PC-3 (cell line): ENCODE measurements at regions of chr17 and their contacts with region 1.

Region 1: DNA sequence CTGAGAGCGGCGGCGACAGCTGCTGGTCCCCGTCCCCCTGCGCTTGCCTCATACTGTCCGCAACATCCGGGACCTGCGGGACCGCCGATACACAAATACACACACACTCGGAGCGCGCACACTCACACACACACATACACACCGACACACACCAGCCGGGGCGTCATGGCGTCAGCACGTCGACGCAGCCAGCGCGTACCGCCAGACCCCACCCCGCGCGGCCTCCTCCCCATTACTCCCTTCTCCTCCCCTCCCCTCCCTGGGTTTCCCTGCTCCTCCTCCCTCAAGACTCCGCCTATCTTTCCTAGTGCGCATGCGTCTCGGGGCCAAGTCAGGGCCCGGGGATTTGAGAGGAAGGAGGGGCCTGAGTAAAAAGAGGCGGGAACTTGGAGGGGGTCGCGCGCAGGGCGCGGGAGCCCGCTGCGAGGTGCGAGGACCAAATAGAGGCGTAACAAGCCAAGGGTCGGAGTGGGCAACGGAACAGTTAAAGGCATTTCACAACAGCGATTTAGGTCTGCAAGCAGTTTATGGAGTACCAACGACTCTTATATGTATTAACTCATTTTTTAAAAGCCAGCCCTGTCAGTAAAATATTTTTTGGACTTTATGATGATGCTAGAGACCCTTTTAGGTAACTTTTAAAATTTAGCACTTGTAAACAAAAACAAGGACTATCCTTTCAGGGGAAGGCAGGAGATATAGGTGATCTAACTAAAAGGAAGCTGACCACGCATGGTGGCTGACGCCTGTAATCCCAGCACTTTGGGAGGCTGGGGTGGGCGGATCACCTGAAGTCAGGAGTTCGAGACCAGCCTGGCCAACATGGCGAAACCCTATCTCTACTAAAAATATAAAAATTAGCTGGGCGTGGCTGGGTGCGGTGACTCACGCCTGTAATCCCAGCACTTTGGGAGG is at the start of gene SPOP:
- DNase-seq: peak; percentile 100
- ATAC-seq: peak; percentile 91
- H3K4me3 ChIP-seq: peak within 1 kb of the TSS; percentile 90
- H3K27ac ChIP-seq: peak within 1 kb of the TSS; percentile 71
- H3K4me1 ChIP-seq: peaks cover 24% of the 10 kb centered on the region
- H3K27me3 ChIP-seq: no peaks in the 10 kb centered on the region
- CTCF ChIP-seq: no peak
- total RNA-seq, gene SPOP: 52.9 and 54.7 TPM in 2 replicates

Region 2: DNA sequence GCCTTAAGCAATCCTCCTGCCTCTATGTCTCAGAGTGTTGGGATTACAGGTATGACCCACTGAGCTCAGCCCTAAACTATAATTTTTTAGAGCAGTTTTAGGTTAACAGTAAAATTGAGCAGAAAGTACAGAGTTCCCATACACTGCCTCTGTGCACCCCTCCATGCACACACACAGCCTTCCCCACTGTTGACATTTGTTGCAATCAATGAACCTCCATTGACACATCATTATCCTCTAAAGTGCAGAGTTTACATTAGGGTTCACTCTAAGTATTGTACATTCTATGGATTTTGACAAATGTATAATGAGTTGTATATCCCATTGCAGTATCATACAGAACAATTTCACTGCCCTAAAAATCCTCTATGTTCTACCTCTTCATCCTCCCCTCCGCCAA is 148.1 kb before region 1 on chr17:
- CTCF ChIA-PET with region 1: interaction called, 14 read pairs
- POLR2A ChIA-PET with region 1: no interaction called
- intact Hi-C with region 1: no loop called
- DNase-seq: no peak
- ATAC-seq: no peak
- H3K4me3 ChIP-seq: no peak overlapping the region
- H3K27ac ChIP-seq: no peak overlapping the region
- H3K4me1 ChIP-seq: no peaks in the 10 kb centered on the region
- H3K27me3 ChIP-seq: peaks cover 54% of the 10 kb centered on the region
- CTCF ChIP-seq: no peak

Region 3: GRCh38 chr17:49637050-49637449 is 41.1 kb before region 1 on chr17:
- CTCF ChIA-PET with region 1: no interaction called
- POLR2A ChIA-PET with region 1: no interaction called
- intact Hi-C with region 1: loop called (anchors 5 kb)
- DNase-seq: peak; percentile 22
- ATAC-seq: no peak
- H3K4me3 ChIP-seq: no peak overlapping the region
- H3K27ac ChIP-seq: no peak overlapping the region
- H3K4me1 ChIP-seq: peaks cover 13% of the 10 kb centered on the region
- H3K27me3 ChIP-seq: no peaks in the 10 kb centered on the region
- CTCF ChIP-seq: no peak

Region 4: DNA sequence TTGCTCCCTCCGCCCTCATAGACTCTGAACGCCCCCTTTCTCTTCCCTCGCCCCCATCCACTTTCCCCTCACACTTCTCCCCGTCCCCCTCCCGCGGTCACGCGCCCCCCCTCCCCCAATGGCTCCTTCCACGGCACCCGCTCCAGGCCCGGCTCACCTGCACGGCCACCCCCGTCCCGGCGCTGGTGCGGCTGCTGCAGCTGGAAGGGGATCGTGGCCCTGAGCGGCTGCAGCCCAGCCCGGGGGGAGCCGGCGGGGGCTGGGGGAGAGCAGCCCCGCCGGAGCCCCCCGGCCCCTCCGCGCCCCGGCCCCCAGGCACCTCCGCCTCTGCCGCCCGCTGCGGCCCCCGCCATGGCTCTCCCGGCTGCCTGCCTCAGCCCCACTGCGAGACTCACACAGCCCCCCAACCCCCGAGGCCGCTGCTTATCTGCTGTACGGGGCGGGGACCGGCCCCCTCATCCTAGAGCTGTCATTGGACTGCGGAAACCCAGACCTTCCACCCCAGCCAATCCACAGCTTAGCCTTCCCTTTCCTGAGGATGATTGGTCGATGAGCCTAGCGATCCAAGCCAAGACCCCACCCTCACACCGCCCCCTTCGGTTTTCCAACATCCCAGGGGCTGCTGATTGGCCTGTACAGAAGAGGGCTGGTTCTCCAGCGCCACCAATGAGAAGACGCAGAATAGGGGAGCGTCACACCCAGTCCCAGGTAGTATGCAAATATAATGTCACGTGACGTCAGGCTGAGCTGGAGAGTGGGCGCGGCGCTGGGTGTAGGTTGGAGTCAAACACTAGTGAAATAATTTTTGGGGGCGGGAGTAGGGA is 85.8 kb after region 1 on chr17 and contains the start of gene FAM117A:
- CTCF ChIA-PET with region 1: interaction called, 10 read pairs
- POLR2A ChIA-PET with region 1: no interaction called
- intact Hi-C with region 1: no loop called
- DNase-seq: peak; percentile 100
- ATAC-seq: peak; percentile 96
- H3K4me3 ChIP-seq: peak within 1 kb of the TSS; percentile 76
- H3K27ac ChIP-seq: no peak within 1 kb of the TSS
- H3K4me1 ChIP-seq: peaks cover 24% of the 10 kb centered on the region
- H3K27me3 ChIP-seq: 0 out of 2 replicates have a peak, but pooled peaks cover 6% of the 10 kb centered on the region
- CTCF ChIP-seq: no peak
- total RNA-seq, gene FAM117A: 9.7 and 16.3 TPM in 2 replicates